PC-9 (cell line): ENCODE measurements at regions of chr5 and their contacts with region 1.

Region 1: DNA sequence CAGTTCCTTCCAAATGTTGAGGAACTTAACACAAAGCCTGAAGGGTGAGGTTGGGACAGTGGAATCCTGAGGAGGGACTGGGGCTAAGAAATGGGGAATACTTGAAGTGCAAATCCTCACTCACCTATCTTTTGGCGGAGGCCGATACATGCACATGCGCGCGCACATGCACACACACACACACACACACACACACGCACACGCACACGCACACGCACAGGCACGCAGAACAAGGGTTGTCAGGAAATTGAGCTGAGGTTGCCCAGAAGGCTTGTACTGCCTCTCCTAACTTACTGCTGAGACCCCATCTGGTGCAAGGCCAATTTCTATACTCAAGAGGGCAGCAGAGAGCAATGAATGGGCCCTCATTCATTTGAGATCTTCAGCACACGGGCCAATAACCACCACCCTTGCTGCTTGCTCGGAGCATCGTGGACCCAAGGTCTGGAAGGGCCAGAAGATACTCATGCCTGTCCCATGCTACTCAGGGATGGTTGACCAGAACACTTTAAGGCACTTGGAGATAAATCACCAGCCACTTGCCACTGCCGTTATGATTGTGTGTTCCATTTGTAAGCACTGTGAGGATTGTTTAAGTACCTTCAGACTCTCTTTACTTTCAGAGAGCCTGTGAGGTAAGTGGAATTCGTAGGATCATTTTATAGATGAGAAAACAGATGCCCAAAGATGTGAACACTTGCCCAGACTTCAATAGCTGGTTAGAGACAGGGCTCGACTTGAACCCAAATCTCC is 21.5 kb downstream of the BTF3 start:
- DNase-seq: peak; percentile 58 to 64
- H3K4me3 ChIP-seq: no peak overlapping the region
- H3K27ac ChIP-seq: no peak overlapping the region
- H3K4me1 ChIP-seq: peaks cover 18% of the 10 kb centered on the region
- H3K27me3 ChIP-seq: no peaks in the 10 kb centered on the region
- CTCF ChIP-seq: peak; percentile 80

Region 2: DNA sequence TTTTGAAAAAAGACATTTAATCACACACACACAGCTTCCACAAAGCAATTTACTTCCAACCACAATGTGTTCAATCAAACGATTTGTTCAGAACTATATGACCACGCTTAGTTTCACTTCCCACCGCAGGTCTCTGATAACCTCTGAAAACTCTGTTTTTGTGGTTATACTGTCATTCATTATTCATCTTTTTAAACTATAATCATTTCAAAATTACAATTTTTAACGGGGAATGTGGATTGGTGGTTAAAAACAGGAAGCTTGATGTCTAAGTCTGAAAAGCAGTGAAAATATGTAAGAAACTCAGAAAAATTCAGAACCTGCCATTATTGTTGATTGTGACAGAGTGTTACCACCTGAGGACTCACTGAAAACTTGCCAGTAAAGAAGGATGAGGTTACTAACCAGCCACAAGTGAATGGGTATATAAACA is 359.5 kb before region 1 on chr5:
- CTCF ChIA-PET with region 1: no interaction called
- POLR2A ChIA-PET with region 1: no interaction called
- intact Hi-C with region 1: no loop called
- DNase-seq: no peak
- H3K4me3 ChIP-seq: no peak overlapping the region
- H3K27ac ChIP-seq: no peak overlapping the region
- H3K4me1 ChIP-seq: no peaks in the 10 kb centered on the region
- H3K27me3 ChIP-seq: no peaks in the 10 kb centered on the region
- CTCF ChIP-seq: no peak

Region 3: GRCh38 chr5:73565139-73565968 is 45.6 kb after region 1 on chr5 and contains the starts of genes ANKRA2 and UTP15:
- CTCF ChIA-PET with region 1: no interaction called
- POLR2A ChIA-PET with region 1: interaction called, 5 read pairs
- intact Hi-C with region 1: loop called (anchors 2 kb)
- DNase-seq: peak; percentile 90 to 96
- H3K4me3 ChIP-seq: peak within 1 kb of the TSS; percentile 90
- H3K27ac ChIP-seq: peak within 1 kb of the TSS; percentile 20
- H3K4me1 ChIP-seq: peaks cover 23% of the 10 kb centered on the region
- H3K27me3 ChIP-seq: no peaks in the 10 kb centered on the region
- CTCF ChIP-seq: no peak
- total RNA-seq, gene ANKRA2: 12.9 and 15.5 TPM in 2 replicates
- total RNA-seq, gene UTP15: 15.1 and 19.4 TPM in 2 replicates

Region 4: GRCh38 chr5:73792687-73793320 is 273.1 kb after region 1 on chr5:
- CTCF ChIA-PET with region 1: interaction called, 3 read pairs
- POLR2A ChIA-PET with region 1: no interaction called
- intact Hi-C with region 1: loop called (anchors 1 kb)
- DNase-seq: peak; percentile 58 to 72
- H3K4me3 ChIP-seq: no peak overlapping the region
- H3K27ac ChIP-seq: no peak overlapping the region
- H3K4me1 ChIP-seq: peaks cover 12% of the 10 kb centered on the region
- H3K27me3 ChIP-seq: no peaks in the 10 kb centered on the region
- CTCF ChIP-seq: peak; percentile 98

Region 5: GRCh38 chr5:73826301-73827105 is 306.8 kb after region 1 on chr5:
- CTCF ChIA-PET with region 1: interaction called, 14 read pairs
- POLR2A ChIA-PET with region 1: no interaction called
- intact Hi-C with region 1: no loop called
- DNase-seq: peak; percentile 25 to 59
- H3K4me3 ChIP-seq: no peak overlapping the region
- H3K27ac ChIP-seq: peak overlapping the region; percentile 52
- H3K4me1 ChIP-seq: peaks cover 57% of the 10 kb centered on the region
- H3K27me3 ChIP-seq: no peaks in the 10 kb centered on the region
- CTCF ChIP-seq: no peak